ENCODE measurements at regions of chr7 and their contacts with region 1.

Region 1: DNA sequence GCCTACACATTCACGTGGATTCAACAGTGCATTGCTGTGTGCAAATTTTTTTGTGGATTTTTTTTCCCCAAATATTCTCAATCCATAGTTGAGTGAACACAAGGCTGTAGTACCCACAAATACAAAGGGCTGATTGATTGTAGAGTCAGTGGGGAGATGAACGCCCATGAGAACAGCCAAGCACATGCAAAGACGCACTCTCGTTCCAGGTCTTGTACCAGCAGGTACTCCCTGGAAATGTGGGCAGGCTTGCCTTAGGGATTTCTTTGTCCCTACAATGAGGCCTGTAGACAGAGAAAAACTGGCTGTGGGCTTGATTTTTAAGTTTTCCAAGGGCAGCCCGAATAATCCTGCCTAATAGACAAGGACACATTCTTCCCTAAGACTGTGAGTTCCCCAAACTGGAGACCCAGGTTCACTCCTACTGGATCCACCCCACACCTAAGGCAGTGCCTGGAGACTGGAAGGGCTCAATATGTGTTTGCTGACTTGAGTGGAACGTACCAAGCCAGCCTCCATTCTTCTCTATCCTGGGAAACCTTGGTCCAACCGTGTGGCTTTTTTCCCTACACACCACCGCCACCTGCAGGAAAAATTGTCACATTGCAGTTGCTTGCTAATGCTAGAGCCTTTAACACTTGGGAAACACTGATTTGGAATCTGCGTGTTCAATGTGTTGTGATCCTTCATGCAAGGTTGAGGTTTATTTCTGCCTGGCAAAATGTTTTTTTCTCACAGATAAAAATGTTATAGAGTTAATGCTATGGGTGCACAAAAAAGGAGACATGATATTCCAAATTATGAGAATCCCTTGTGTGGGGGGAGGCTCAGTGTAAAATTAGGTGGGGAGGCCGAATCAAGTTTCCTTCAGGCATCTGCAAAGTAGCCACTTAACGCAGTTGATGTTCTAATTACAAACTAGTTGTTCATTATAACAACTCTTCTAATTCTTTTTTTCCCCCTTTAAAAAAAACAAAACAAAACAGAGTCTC is 49.3 kb downstream of the PPP1R17 start:
- DNase-seq: peak; percentile 48 to 72
- H3K4me3 ChIP-seq: no peak overlapping the region
- H3K4me1 ChIP-seq: no peaks in the 10 kb centered on the region
- H3K27me3 ChIP-seq: no peaks in the 10 kb centered on the region

Region 2: GRCh38 chr7:31134246-31135188 is 601.8 kb before region 1 on chr7:
- in situ Hi-C with region 1: loop called (anchors 5 kb)
- DNase-seq: peak; percentile 65 to 81
- H3K4me3 ChIP-seq: no peak overlapping the region
- H3K4me1 ChIP-seq: no peaks in the 10 kb centered on the region
- H3K27me3 ChIP-seq: no peaks in the 10 kb centered on the region

Region 3: GRCh38 chr7:31175672-31176071 is 560.6 kb before region 1 on chr7:
- in situ Hi-C with region 1: no loop called
- DNase-seq: no peak
- H3K4me3 ChIP-seq: no peak overlapping the region
- H3K4me1 ChIP-seq: no peaks in the 10 kb centered on the region
- H3K27me3 ChIP-seq: peaks cover 4% of the 10 kb centered on the region; the same call in 1 of the 2 replicates

Region 4: DNA sequence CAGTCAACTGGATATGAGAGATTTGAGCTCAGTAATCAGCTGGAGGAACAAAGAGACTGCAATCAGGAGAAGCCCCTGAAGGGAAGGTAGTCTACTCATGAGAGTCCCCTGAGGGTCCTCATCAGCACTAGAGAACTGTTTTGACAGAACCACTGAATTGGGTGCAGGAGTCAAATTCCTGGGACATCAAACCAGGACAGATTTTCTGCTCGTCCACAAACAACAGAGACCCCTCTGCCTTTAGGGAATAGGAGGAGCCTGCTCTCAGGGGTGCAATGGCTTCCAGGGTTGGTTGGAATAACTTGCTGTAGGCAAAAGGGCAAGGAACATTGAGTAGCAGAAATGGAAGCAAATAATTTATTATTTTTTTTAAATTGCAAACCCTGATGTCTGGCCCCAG is 373.9 kb before region 1 on chr7:
- in situ Hi-C with region 1: no loop called
- DNase-seq: no peak
- H3K4me3 ChIP-seq: no peak overlapping the region
- H3K4me1 ChIP-seq: no peaks in the 10 kb centered on the region
- H3K27me3 ChIP-seq: no peaks in the 10 kb centered on the region

Region 5: GRCh38 chr7:31373337-31374289 is 362.7 kb before region 1 on chr7:
- in situ Hi-C with region 1: loop called (anchors 10 kb)
- DNase-seq: peak; percentile 48 to 67
- H3K4me3 ChIP-seq: no peak overlapping the region
- H3K4me1 ChIP-seq: no peaks in the 10 kb centered on the region
- H3K27me3 ChIP-seq: peaks cover 5% of the 10 kb centered on the region

Region 6: GRCh38 chr7:31828520-31828919 is 92.2 kb after region 1 on chr7:
- in situ Hi-C with region 1: no loop called
- DNase-seq: no peak
- H3K4me3 ChIP-seq: no peak overlapping the region
- H3K4me1 ChIP-seq: no peaks in the 10 kb centered on the region
- H3K27me3 ChIP-seq: no peaks in the 10 kb centered on the region

Region 7: GRCh38 chr7:32093415-32094408 is 357.4 kb after region 1 on chr7:
- in situ Hi-C with region 1: no loop called
- DNase-seq: no peak
- H3K4me3 ChIP-seq: no peak overlapping the region
- H3K4me1 ChIP-seq: no peaks in the 10 kb centered on the region
- H3K27me3 ChIP-seq: no peaks in the 10 kb centered on the region